ENCODE measurements at regions of chr1 and their contacts with region 1.

Region 1: GRCh38 chr1:180125450-180125849 is 29.2 kb upstream of the QSOX1 start:
- DNase-seq: no peak
- H3K4me3 ChIP-seq: no peak overlapping the region
- H3K27ac ChIP-seq: no peak overlapping the region
- H3K4me1 ChIP-seq: no peaks in the 10 kb centered on the region
- H3K27me3 ChIP-seq: no peaks in the 10 kb centered on the region
- CTCF ChIP-seq: no peak
- EP300 ChIP-seq: no peak
- POLR2A ChIP-seq: no peak

Region 2: GRCh38 chr1:180163041-180163440 is 37.6 kb after region 1 on chr1:
- intact Hi-C with region 1: loop called in 1 of 4 experiments (anchors 1 kb)
- DNase-seq: no peak
- H3K4me3 ChIP-seq: no peak overlapping the region
- H3K27ac ChIP-seq: no peak overlapping the region
- H3K4me1 ChIP-seq: peaks cover 20% of the 10 kb centered on the region
- H3K27me3 ChIP-seq: no peaks in the 10 kb centered on the region
- CTCF ChIP-seq: no peak
- EP300 ChIP-seq: no peak
- POLR2A ChIP-seq: no peak